Activated CD4-positive, alpha-beta T cell treated with anti-CD3 and anti-CD28 coated beads, Interleukin-2, amount 10 ng/mL, durations not matched to agents 7 days and 5 days (primary cell): ENCODE measurements at regions of chr22 and their contacts with region 1.

Region 1: DNA sequence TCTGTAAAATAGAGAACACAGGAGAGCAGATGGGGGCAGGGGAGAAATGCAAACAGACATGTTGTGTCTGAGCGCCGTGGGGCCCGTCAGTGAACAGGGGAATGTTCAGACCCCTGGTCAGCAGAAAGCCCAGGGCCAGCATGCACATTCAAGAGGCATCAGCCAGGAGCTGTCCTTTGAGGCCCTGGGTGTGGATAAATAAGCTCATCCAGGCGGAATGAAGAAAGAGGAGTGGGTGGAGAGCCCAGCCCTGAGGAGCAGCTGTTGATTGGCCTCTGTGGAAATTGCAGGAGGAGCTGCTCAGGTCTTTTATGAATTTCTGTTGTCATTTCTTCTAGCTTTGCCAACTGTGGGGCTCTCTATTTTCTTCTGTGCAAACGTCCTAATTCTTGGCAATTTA is 49.7 kb upstream of the CECR2 start:
- DNase-seq: no peak
- H3K4me3 Mint-ChIP-seq: no peak overlapping the region
- H3K27ac Mint-ChIP-seq: no peak overlapping the region
- H3K4me1 Mint-ChIP-seq: no peaks in the 10 kb centered on the region
- H3K27me3 Mint-ChIP-seq: peaks cover 5% of the 10 kb centered on the region

Region 2: GRCh38 chr22:17307566-17307965 is 12.0 kb before region 1 on chr22:
- CTCF ChIA-PET with region 1: interaction called, 14 read pairs
- POLR2A ChIA-PET with region 1: no interaction called
- DNase-seq: no peak
- H3K4me3 Mint-ChIP-seq: no peak overlapping the region
- H3K27ac Mint-ChIP-seq: no peak overlapping the region
- H3K4me1 Mint-ChIP-seq: peaks cover 23% of the 10 kb centered on the region
- H3K27me3 Mint-ChIP-seq: peaks cover 2% of the 10 kb centered on the region